Activated CD8-positive, alpha-beta T cell treated with anti-CD3 and anti-CD28 coated beads for 36 hours (primary cell): ENCODE measurements at regions of chr11 and their contacts with region 1.

Region 1: GRCh38 chr11:72141066-72141465 is 5.5 kb downstream of the FOLR3 start:
- DNase-seq: peak; percentile 45
- ATAC-seq: peak; percentile 60
- H3K4me3 Mint-ChIP-seq: no peak overlapping the region
- H3K27ac Mint-ChIP-seq: peak overlapping the region; percentile 9
- H3K4me1 Mint-ChIP-seq: peaks cover 17% of the 10 kb centered on the region
- H3K27me3 Mint-ChIP-seq: peaks cover 4% of the 10 kb centered on the region
- CTCF ChIP-seq: no peak

Region 2: GRCh38 chr11:72030472-72031045 is 110.5 kb before region 1 on chr11:
- CTCF ChIA-PET with region 1: interaction called, 61 read pairs
- POLR2A ChIA-PET with region 1: no interaction called
- intact Hi-C with region 1: no loop called
- DNase-seq: no peak
- ATAC-seq: no peak
- H3K4me3 Mint-ChIP-seq: no peak overlapping the region
- H3K27ac Mint-ChIP-seq: peak overlapping the region; percentile 79
- H3K4me1 Mint-ChIP-seq: peaks cover 55% of the 10 kb centered on the region
- H3K27me3 Mint-ChIP-seq: no peaks in the 10 kb centered on the region
- CTCF ChIP-seq: no peak

Region 3: DNA sequence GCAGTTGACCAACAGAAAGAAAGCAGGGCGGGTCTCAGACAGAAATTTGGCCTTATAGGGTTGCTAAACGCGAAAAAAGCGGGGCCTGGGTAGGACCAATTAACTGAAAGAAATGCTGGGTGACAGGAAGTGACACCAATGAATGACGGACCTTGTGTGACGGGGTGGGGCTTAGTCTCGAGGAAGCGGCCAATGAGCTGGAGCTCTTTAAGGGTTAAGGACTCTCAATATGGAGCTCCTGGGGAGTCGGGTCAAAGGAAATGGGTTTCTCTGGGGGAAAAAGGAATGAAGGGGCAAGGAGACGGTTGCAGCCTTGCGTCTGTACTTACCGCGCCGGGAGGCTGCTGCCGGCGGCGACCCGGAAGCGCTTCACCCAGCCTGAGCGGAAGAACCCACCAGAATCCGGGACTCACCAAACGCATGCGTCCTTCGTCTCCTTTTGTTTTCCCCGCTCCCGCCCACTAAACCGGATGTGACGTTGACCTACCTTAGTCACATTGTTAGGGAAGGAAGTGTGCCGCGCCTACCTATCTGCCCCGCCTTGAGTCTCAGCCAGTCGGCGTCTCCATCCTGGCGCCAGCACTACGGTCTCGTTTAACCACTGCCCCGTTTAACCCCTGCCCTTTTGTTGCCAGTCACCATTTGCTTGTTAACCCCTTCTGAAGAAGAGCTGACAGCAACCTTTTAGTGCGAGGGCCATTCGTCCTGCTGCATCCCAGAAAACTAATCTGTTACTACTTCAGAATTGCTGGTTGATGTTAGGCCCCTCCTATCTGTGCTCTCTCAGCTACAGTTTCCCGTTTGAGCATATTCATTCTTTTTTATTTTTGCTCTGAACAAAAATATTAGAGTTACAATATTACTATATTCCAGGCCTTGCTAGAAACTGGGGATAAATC is 28.5 kb before region 1 on chr11 and contains the start of gene ANAPC15:
- CTCF ChIA-PET with region 1: interaction called, 10 read pairs
- POLR2A ChIA-PET with region 1: no interaction called
- intact Hi-C with region 1: no loop called
- DNase-seq: peak; percentile 100
- ATAC-seq: peak; percentile 90
- H3K4me3 Mint-ChIP-seq: peak within 1 kb of the TSS; percentile 95
- H3K27ac Mint-ChIP-seq: peak within 1 kb of the TSS; percentile 99
- H3K4me1 Mint-ChIP-seq: peaks cover 14% of the 10 kb centered on the region
- H3K27me3 Mint-ChIP-seq: peaks cover 1% of the 10 kb centered on the region
- CTCF ChIP-seq: no peak
- total RNA-seq, gene ANAPC15: 66.0 to 67.4 TPM

Region 4: DNA sequence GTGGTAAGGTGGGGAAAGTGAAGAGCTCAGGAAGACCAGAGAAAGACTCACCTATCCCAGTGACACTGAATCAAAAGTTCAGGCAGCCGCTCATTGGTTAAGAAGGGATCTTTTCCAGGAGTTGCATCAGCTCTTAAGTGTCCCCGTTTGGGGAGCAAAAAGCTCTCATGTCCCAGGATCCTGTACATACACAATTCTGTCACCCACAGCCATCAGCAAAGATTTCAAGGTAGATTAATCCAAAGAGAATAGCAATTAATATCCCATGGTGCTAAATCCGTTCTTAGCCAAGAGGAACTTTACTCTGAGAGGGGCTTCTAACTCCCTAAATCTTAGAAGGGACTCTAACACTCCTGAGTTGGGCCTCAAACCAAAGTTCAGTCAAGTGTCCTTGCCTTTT is 13.8 kb after region 1 on chr11:
- CTCF ChIA-PET with region 1: interaction called, 21 read pairs
- POLR2A ChIA-PET with region 1: interaction called, 5 read pairs
- intact Hi-C with region 1: no loop called
- DNase-seq: no peak
- ATAC-seq: no peak
- H3K4me3 Mint-ChIP-seq: no peak overlapping the region
- H3K27ac Mint-ChIP-seq: no peak overlapping the region
- H3K4me1 Mint-ChIP-seq: no peaks in the 10 kb centered on the region
- H3K27me3 Mint-ChIP-seq: peaks cover 3% of the 10 kb centered on the region
- CTCF ChIP-seq: no peak

Region 5: DNA sequence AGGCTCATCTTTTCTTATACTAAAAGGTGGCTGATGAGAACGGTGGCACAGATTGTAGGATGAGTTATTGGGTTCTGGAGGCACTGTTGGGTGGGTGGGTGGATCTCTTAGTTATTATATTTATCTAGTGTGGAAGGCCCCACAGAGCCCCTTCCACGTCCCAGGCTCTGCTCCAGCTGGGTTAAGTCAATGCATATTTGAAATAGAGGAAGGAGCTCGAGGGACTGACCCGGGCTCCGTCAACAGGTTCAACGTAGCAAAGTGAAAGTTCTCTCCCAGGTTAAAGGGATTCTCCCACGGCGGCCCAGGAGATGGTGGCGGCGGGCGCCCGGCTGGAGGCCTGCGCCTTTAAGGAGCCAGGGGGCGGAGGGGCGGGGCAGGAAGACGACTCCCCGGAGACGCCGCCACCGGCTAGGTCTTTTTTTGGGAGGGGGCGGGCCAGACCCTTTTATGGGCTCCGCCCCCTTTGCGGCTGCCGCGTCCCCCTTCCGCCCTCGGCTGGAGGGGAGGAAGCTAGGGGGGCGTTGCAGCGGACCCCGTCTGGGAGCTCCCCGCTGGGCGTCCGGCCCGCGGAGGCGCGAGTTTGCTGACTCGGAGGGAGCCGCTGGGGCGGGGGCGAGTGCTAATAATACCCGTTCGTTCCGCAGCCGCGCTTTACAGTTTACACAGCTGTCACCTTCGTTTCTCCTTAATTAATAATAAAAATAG is 82.0 kb after region 1 on chr11:
- CTCF ChIA-PET with region 1: interaction called, 11 read pairs
- POLR2A ChIA-PET with region 1: no interaction called
- intact Hi-C with region 1: no loop called
- DNase-seq: peak; percentile 97
- ATAC-seq: peak; percentile 78
- H3K4me3 Mint-ChIP-seq: peak overlapping the region; percentile 78
- H3K27ac Mint-ChIP-seq: peak overlapping the region; percentile 82
- H3K4me1 Mint-ChIP-seq: peaks cover 23% of the 10 kb centered on the region
- H3K27me3 Mint-ChIP-seq: peaks cover 2% of the 10 kb centered on the region
- CTCF ChIP-seq: no peak